ENCODE measurements at regions of chr2 and their contacts with region 1.

Region 1: GRCh38 chr2:19901442-19902215 is at the start of gene TTC32:
- DNase-seq: peak; percentile 95
- H3K4me3 ChIP-seq: peak within 1 kb of the TSS; percentile 68
- H3K27ac ChIP-seq: peak within 1 kb of the TSS; percentile 97
- H3K4me1 ChIP-seq: peaks cover 28% of the 10 kb centered on the region
- H3K27me3 ChIP-seq: no peaks in the 10 kb centered on the region
- CTCF ChIP-seq: no peak
- total RNA-seq, gene TTC32: 11.5 and 16.1 TPM in 2 replicates

Region 2: GRCh38 chr2:19826874-19827273 is 74.8 kb before region 1 on chr2:
- CTCF ChIA-PET with region 1: no interaction called
- POLR2A ChIA-PET with region 1: interaction called, 10 read pairs
- intact Hi-C with region 1: no loop called
- DNase-seq: no peak
- H3K4me3 ChIP-seq: no peak overlapping the region
- H3K27ac ChIP-seq: no peak overlapping the region
- H3K4me1 ChIP-seq: no peaks in the 10 kb centered on the region
- H3K27me3 ChIP-seq: peaks cover 40% of the 10 kb centered on the region
- CTCF ChIP-seq: no peak

Region 3: GRCh38 chr2:20051532-20052228 is 150.1 kb after region 1 on chr2 and contains the start of gene LAPTM4A:
- CTCF ChIA-PET with region 1: no interaction called
- POLR2A ChIA-PET with region 1: no interaction called
- intact Hi-C with region 1: loop called (anchors 5 kb)
- DNase-seq: peak; percentile 100
- H3K4me3 ChIP-seq: peak within 1 kb of the TSS; percentile 88
- H3K27ac ChIP-seq: peak within 1 kb of the TSS; percentile 99
- H3K4me1 ChIP-seq: peaks cover 24% of the 10 kb centered on the region
- H3K27me3 ChIP-seq: no peaks in the 10 kb centered on the region
- CTCF ChIP-seq: no peak
- total RNA-seq, gene LAPTM4A: 149 and 158 TPM in 2 replicates

Region 4: DNA sequence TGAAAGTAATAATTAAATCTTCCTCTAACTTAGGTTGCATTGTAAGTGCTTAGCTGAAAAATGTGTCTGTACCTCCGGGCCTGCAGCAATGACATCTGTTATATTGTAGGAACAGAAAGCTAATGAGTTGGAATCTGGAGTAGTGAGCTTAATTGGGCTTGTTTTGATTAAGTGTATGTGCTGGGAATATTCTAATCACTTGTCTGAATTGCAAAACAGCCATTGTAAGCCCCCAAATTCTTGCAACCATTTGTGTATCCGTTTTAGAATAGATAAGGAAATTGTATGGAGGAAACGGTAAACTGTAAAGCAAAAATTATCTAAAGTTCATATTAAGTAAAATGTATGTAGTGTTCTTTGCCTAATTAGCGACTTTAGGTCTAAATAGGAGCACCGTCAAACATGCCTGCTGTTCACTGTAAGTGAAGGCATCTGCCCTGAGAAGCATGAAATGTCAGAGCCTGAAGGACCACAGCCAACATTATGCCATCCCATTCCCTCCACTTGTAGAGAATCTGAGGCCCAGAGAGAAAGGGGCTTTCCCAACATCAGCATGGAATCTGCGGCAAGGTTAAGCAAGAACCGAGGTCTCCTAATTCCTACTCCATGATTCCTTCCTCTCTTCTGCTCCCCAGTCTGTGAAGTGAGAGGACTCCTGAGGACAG is 1688.5 kb after region 1 on chr2:
- CTCF ChIA-PET with region 1: no interaction called
- POLR2A ChIA-PET with region 1: no interaction called
- intact Hi-C with region 1: no loop called
- DNase-seq: no peak
- H3K4me3 ChIP-seq: no peak overlapping the region
- H3K27ac ChIP-seq: no peak overlapping the region
- H3K4me1 ChIP-seq: no peaks in the 10 kb centered on the region
- H3K27me3 ChIP-seq: no peaks in the 10 kb centered on the region
- CTCF ChIP-seq: no peak

Measured in A673 (cell line).